Sigmoid colon (tissue), 7 donors: ENCODE measurements at regions of chr5 and their contacts with region 1.

Region 1: GRCh38 chr5:91383027-91383955 is at the start of gene ARRDC3:
- DNase-seq: peak; percentile 98
- H3K4me3 ChIP-seq: peak within 1 kb of the TSS; percentile 73 to 82 (median 82)
- H3K27ac ChIP-seq: peak within 1 kb of the TSS; percentile 96 to 100 (median 98)
- H3K4me1 ChIP-seq: peaks cover 0 to 26% (median 18%) of the 10 kb centered on the region in 4 donors
- H3K27me3 ChIP-seq: no peaks in the 10 kb centered on the region
- CTCF ChIP-seq: no peak
- EP300 ChIP-seq: peak in 1 of 4 donors; percentile 47
- POLR2A ChIP-seq: peak; percentile 91 to 92
- total RNA-seq, gene ARRDC3: 35.2 to 66.7 (median 48.7) TPM

Region 2: DNA sequence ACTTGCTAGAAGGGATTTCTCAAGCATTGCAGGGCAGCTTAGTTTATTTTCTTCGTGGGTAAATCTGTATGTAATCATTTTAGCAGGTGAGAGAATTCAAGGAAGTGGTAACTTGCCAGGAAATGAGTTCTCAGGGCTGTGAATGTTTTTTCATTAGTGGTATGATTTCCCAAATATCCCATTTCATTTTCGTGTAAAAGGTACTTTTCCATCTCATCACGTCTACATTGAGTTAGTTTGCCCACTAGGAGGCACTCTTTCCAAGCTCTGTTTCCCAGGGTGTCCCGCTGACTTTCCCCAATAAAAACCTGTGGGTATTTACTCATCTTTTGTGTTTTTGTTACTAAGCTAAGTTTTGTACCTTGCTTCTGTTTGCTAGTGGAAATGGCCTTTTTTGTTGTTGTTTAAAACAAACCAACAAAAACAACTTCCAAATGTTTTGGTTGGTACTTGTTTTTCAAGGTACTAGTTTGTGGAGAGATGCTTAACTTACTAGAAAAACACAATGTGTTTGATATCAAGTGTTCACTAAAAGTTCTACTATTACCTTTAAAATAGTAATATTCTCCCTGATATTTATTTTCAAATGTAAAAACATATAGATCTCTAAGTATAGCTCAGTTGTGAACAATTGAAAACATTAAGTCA is 451.1 kb before region 1 on chr5:
- intact Hi-C with region 1: loop called (anchors 1 kb)
- DNase-seq: peak; percentile 75
- H3K4me3 ChIP-seq: no peak overlapping the region
- H3K27ac ChIP-seq: no peak overlapping the region
- H3K4me1 ChIP-seq: peaks cover 0 to 17% (median 11%) of the 10 kb centered on the region in 4 donors
- H3K27me3 ChIP-seq: no peaks in the 10 kb centered on the region
- CTCF ChIP-seq: peak; percentile 71 to 78 (median 76)
- EP300 ChIP-seq: no peak
- POLR2A ChIP-seq: no peak

Region 3: GRCh38 chr5:91101600-91102379 is 281.5 kb before region 1 on chr5:
- intact Hi-C with region 1: loop called (anchors 1 kb)
- DNase-seq: peak; percentile 90
- H3K4me3 ChIP-seq: no peak overlapping the region
- H3K27ac ChIP-seq: peak overlapping the region in 1 of 4 donors; percentile 27
- H3K4me1 ChIP-seq: peaks cover 0 to 29% (median 13%) of the 10 kb centered on the region in 4 donors
- H3K27me3 ChIP-seq: no peaks in the 10 kb centered on the region
- CTCF ChIP-seq: peak; percentile 75 to 93 (median 90)
- EP300 ChIP-seq: no peak
- POLR2A ChIP-seq: no peak

Region 4: GRCh38 chr5:91280362-91281269 is 102.7 kb before region 1 on chr5:
- intact Hi-C with region 1: loop called (anchors 1 kb)
- DNase-seq: peak; percentile 97
- H3K4me3 ChIP-seq: peak overlapping the region; percentile 35 to 61 (median 58)
- H3K27ac ChIP-seq: peak overlapping the region; percentile 87 to 95 (median 88)
- H3K4me1 ChIP-seq: peaks cover 0 to 41% (median 21%) of the 10 kb centered on the region in 4 donors
- H3K27me3 ChIP-seq: no peaks in the 10 kb centered on the region
- CTCF ChIP-seq: no peak
- EP300 ChIP-seq: peak in 2 of 4 donors; percentile 50 to 70
- POLR2A ChIP-seq: peak; percentile 52 to 62

Region 5: GRCh38 chr5:91329283-91329682 is 54.0 kb before region 1 on chr5:
- intact Hi-C with region 1: loop called (anchors 5 kb)
- DNase-seq: no peak
- H3K4me3 ChIP-seq: no peak overlapping the region
- H3K27ac ChIP-seq: peak overlapping the region in 3 of 4 donors; percentile 29 to 65 (median 65)
- H3K4me1 ChIP-seq: peaks cover 0 to 53% (median 28%) of the 10 kb centered on the region in 4 donors
- H3K27me3 ChIP-seq: no peaks in the 10 kb centered on the region
- CTCF ChIP-seq: no peak
- EP300 ChIP-seq: no peak
- POLR2A ChIP-seq: no peak